HEK293T (cell line): ENCODE measurements at regions of chrX and their contacts with region 1.

Region 1: DNA sequence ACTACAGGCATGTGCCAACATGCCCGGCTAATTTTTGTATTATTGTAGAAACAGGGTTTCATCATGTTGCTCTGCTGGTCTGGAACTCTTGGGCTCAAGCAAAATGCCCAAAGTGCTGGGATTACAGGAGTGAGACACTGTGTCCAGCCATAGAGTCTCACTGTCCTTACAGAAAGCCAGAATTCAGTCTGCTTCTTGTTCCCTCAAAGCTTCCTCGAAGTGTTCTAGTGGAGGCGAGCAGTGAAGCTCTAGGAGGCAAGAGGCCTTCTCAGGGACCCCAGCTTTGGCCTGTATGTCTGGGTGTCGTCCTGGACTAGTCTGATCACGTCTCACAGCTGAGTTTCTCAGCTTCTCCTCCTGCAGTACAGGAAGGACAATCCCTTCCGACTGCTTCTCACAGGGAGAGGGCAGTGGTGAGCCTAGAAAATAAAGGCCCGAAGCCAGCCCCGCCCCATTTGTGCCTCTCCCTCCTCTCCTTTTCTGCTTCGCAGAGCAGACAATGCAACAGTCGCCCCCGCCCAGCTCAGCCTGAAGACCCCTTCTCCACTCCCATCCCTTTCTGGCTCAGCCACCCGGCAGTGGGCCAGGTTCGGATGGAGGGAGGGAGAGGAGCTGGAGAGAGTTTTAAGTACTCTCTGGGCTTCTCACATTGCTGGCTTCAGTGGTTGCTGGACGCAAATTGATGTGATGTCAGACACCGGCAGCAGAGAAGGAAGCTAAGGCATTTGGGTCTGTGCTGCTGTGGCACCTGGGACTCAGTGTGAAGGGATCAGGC is 11.1 kb upstream of the FAM3A start:
- DNase-seq: peak; percentile 78

Region 2: GRCh38 chrX:153599192-153600031 is 927.7 kb before region 1 on chrX:
- CTCF ChIA-PET with region 1: no interaction called
- POLR2A ChIA-PET with region 1: no interaction called
- DNase-seq: peak; percentile 98

Region 3: DNA sequence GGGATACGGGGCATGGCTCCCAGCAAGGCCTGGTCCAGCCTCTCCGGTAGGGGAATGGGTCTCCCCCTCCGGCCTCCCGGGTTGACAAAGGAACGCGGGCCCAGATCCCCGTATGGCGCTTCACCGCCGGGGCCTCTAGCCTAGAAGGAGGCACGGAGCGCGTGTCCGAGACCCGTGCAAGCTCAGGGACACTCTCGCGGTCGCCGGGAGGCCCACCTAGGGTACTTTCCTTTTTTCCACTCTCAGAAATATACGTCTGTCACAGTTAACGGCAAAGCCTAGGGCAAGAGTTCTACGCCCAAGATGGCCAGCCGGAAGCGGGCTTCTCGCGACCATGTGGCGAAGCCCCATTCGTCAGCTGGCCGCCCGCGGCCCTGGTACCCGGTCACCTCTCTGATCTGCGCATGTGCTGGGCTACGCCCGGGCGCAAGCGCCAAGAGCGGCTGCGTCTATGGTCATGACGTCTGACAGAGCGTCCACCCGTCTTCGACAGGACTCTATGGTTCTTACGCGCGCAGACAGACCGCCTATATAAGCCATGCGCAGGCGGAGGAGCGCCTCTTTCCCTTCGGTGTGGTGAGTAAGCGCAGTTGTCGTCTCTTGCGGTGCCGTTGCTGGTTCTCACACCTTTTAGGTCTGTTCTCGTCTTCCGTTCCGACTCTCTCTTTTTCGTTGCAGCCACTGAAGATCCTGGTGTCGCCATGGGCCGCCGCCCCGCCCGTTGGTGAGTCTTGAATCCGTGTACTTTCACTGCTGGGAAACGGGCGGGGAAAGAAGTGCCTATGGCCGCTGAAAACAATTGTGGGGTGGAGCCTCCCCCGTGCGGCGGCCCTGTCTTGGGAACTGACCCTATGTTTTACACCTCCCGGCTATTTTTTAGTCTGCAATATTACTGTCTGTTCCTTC is 129.0 kb before region 1 on chrX and contains the start of gene RPL10:
- CTCF ChIA-PET with region 1: interaction called, 8 read pairs
- POLR2A ChIA-PET with region 1: interaction called, 13 read pairs
- DNase-seq: peak; percentile 97

Region 4: DNA sequence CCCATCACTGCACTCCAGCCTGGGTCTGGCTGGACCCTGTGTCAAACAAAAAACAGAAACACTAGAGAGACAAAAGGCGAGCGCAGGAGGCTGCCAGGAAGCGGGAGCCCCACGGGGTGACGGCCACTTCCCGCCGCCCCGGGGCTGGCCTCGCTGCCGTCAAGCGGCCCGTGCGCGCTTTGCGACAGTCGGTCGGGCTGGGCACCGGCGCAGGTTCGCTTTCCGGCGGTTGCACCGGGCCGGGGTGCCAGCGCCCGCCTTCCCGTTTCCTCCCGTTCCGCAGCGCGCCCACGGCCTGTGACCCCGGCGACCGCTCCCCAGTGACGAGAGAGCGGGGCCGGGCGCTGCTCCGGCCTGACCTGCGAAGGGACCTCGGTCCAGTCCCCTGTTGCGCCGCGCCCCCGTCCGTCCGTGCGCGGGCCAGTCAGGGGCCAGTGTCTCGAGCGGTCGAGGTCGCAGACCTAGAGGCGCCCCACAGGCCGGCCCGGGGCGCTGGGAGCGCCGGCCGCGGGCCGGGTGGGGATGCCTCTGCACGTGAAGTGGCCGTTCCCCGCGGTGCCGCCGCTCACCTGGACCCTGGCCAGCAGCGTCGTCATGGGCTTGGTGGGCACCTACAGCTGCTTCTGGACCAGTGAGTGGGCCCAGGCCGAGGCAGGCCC is 115.6 kb before region 1 on chrX and contains the start of gene TAFAZZIN:
- CTCF ChIA-PET with region 1: no interaction called
- POLR2A ChIA-PET with region 1: interaction called, 10 read pairs
- DNase-seq: peak; percentile 88

Region 5: GRCh38 chrX:154515878-154516655 is 11.0 kb before region 1 on chrX and contains the start of gene FAM3A:
- CTCF ChIA-PET with region 1: interaction called, 12 read pairs
- POLR2A ChIA-PET with region 1: interaction called, 7 read pairs
- DNase-seq: peak; percentile 96

Region 6: GRCh38 chrX:154542468-154543424 is 15.7 kb after region 1 on chrX:
- CTCF ChIA-PET with region 1: interaction called, 14 read pairs
- POLR2A ChIA-PET with region 1: no interaction called
- DNase-seq: no peak